ENCODE measurements at regions of chr21 and their contacts with region 1.

Region 1: GRCh38 chr21:36209626-36210171 is 53.1 kb downstream of the DOP1B start:
- DNase-seq: no peak
- H3K4me3 ChIP-seq: no peak overlapping the region
- H3K27ac ChIP-seq: no peak overlapping the region
- H3K4me1 ChIP-seq: no peaks in the 10 kb centered on the region
- H3K27me3 ChIP-seq: no peaks in the 10 kb centered on the region
- CTCF ChIP-seq: peak; percentile 36 to 42 (median 37)
- EP300 ChIP-seq: no peak
- POLR2A ChIP-seq: no peak

Region 2: GRCh38 chr21:36141513-36141925 is 68.2 kb before region 1 on chr21:
- intact Hi-C with region 1: loop called (anchors 5 kb)
- DNase-seq: no peak
- H3K4me3 ChIP-seq: no peak overlapping the region
- H3K27ac ChIP-seq: no peak overlapping the region
- H3K4me1 ChIP-seq: peaks cover 10 to 19% (median 13%) of the 10 kb centered on the region in 4 donors
- H3K27me3 ChIP-seq: no peaks in the 10 kb centered on the region
- CTCF ChIP-seq: peak; percentile 68 to 82 (median 69)
- EP300 ChIP-seq: no peak
- POLR2A ChIP-seq: no peak

Region 3: GRCh38 chr21:36310016-36310415 is 100.3 kb after region 1 on chr21:
- intact Hi-C with region 1: no loop called
- DNase-seq: no peak
- H3K4me3 ChIP-seq: no peak overlapping the region
- H3K27ac ChIP-seq: no peak overlapping the region
- H3K4me1 ChIP-seq: no peaks in the 10 kb centered on the region
- H3K27me3 ChIP-seq: no peaks in the 10 kb centered on the region
- CTCF ChIP-seq: no peak
- EP300 ChIP-seq: no peak
- POLR2A ChIP-seq: no peak